Panc1 (cell line): ENCODE measurements at regions of chr4 and their contacts with region 1.

Region 1: GRCh38 chr4:78047366-78047765 is 9.8 kb upstream of the FRAS1 start:
- DNase-seq: no peak
- ATAC-seq: no peak
- H3K4me3 ChIP-seq: no peak overlapping the region
- H3K27ac ChIP-seq: no peak overlapping the region
- H3K4me1 ChIP-seq: no peaks in the 10 kb centered on the region
- H3K27me3 ChIP-seq: no peaks in the 10 kb centered on the region
- CTCF ChIP-seq: no peak

Region 2: GRCh38 chr4:77911842-77912450 is 135.4 kb before region 1 on chr4:
- CTCF ChIA-PET with region 1: no interaction called
- POLR2A ChIA-PET with region 1: no interaction called
- in situ Hi-C with region 1: no loop called
- intact Hi-C with region 1: no loop called
- DNase-seq: no peak
- ATAC-seq: no peak
- H3K4me3 ChIP-seq: no peak overlapping the region
- H3K27ac ChIP-seq: no peak overlapping the region
- H3K4me1 ChIP-seq: no peaks in the 10 kb centered on the region
- H3K27me3 ChIP-seq: no peaks in the 10 kb centered on the region
- CTCF ChIP-seq: no peak

Region 3: DNA sequence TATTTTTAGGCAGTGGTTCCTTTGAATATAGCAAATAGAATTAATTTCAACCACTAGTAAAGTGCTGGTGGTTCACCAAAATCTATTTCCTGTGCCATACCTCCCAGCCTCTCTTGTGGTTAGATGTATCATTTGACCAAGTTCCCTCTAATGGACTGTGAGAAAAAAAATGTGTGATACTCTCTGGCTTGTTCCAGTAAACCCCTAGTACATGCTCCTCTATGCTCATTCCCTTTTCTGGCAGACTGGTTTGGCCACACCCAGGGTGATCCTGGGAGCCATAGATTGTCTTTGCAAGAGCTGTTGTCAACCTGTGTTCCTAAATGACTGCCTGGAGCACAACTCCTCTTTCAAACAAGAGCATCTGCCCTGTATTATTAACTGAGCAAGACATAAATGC is 119.3 kb after region 1 on chr4:
- CTCF ChIA-PET with region 1: no interaction called
- POLR2A ChIA-PET with region 1: no interaction called
- in situ Hi-C with region 1: no loop called
- intact Hi-C with region 1: no loop called
- DNase-seq: no peak
- ATAC-seq: no peak
- H3K4me3 ChIP-seq: no peak overlapping the region
- H3K27ac ChIP-seq: no peak overlapping the region
- H3K4me1 ChIP-seq: no peaks in the 10 kb centered on the region
- H3K27me3 ChIP-seq: no peaks in the 10 kb centered on the region; the same call in 1 of the 2 replicates
- CTCF ChIP-seq: no peak

Region 4: GRCh38 chr4:78938868-78939666 is 891.7 kb after region 1 on chr4 and contains the start of gene PAQR3:
- CTCF ChIA-PET with region 1: no interaction called
- POLR2A ChIA-PET with region 1: interaction called, 10 read pairs
- in situ Hi-C with region 1: no loop called
- intact Hi-C with region 1: no loop called
- DNase-seq: no peak
- ATAC-seq: peak; percentile 100
- H3K4me3 ChIP-seq: peak within 1 kb of the TSS; percentile 67 to 71
- H3K27ac ChIP-seq: peak within 1 kb of the TSS; percentile 83
- H3K4me1 ChIP-seq: no peaks in the 10 kb centered on the region; the same call in 1 of the 2 replicates
- H3K27me3 ChIP-seq: no peaks in the 10 kb centered on the region
- CTCF ChIP-seq: no peak
- total RNA-seq, gene PAQR3: 17.3 TPM